A549 (cell line): ENCODE measurements at regions of chr15 and their contacts with region 1.

Region 1: GRCh38 chr15:74382004-74382816 is 14.8 kb upstream of the CYP11A1 start:
- DNase-seq: peak; percentile 62 to 87
- ATAC-seq: peak; percentile 86 to 96
- H3K4me3 ChIP-seq: no peak overlapping the region
- H3K27ac ChIP-seq: no peak overlapping the region
- H3K4me1 ChIP-seq: peaks cover 9% of the 10 kb centered on the region
- CTCF ChIP-seq: peak; percentile 78
- EP300 ChIP-seq: no peak
- POLR2A ChIP-seq: no peak
- RAD21 ChIP-seq: peak; percentile 89 to 91

Region 2: GRCh38 chr15:74172701-74173379 is 209.4 kb before region 1 on chr15:
- CTCF ChIA-PET with region 1: no interaction called
- POLR2A ChIA-PET with region 1: no interaction called
- DNase-seq: no peak
- ATAC-seq: 0 out of 6 replicates have a peak, but pooled peaks of 1 of the 2 experiments have one; percentile 8
- H3K4me3 ChIP-seq: no peak overlapping the region
- H3K27ac ChIP-seq: peak overlapping the region in 1 of 2 experiments; percentile 79; a peak in 4 of 6 replicates
- H3K4me1 ChIP-seq: peaks cover 31% of the 10 kb centered on the region
- CTCF ChIP-seq: no peak
- EP300 ChIP-seq: no peak
- POLR2A ChIP-seq: no peak
- RAD21 ChIP-seq: no peak

Region 3: GRCh38 chr15:74407055-74407691 is 25.0 kb after region 1 on chr15:
- CTCF ChIA-PET with region 1: interaction called, 33 read pairs
- POLR2A ChIA-PET with region 1: no interaction called
- DNase-seq: peak; percentile 21 to 31
- ATAC-seq: peak; percentile 57 to 76
- H3K4me3 ChIP-seq: no peak overlapping the region
- H3K27ac ChIP-seq: peak overlapping the region in 1 of 2 experiments; percentile 55; a peak in 2 of 6 replicates
- H3K4me1 ChIP-seq: peaks cover 8% of the 10 kb centered on the region; the same call in 1 of the 3 replicates
- CTCF ChIP-seq: no peak
- EP300 ChIP-seq: no peak
- POLR2A ChIP-seq: no peak
- RAD21 ChIP-seq: no peak

Region 4: GRCh38 chr15:74460871-74461846 is 78.9 kb after region 1 on chr15 and contains the start of gene UBL7:
- CTCF ChIA-PET with region 1: interaction called, 11 read pairs
- POLR2A ChIA-PET with region 1: interaction called, 7 read pairs
- DNase-seq: peak; percentile 80 to 93
- ATAC-seq: peak; percentile 99
- H3K4me3 ChIP-seq: peak within 1 kb of the TSS; percentile 73
- H3K27ac ChIP-seq: peak within 1 kb of the TSS; percentile 78 to 90
- H3K4me1 ChIP-seq: 0 out of 3 replicates have a peak, but pooled peaks cover 6% of the 10 kb centered on the region
- CTCF ChIP-seq: no peak
- EP300 ChIP-seq: no peak
- POLR2A ChIP-seq: peak; percentile 90
- RAD21 ChIP-seq: no peak
- polyA plus RNA-seq, gene UBL7: 48.5 and 62.4 TPM in 2 replicates

Region 5: DNA sequence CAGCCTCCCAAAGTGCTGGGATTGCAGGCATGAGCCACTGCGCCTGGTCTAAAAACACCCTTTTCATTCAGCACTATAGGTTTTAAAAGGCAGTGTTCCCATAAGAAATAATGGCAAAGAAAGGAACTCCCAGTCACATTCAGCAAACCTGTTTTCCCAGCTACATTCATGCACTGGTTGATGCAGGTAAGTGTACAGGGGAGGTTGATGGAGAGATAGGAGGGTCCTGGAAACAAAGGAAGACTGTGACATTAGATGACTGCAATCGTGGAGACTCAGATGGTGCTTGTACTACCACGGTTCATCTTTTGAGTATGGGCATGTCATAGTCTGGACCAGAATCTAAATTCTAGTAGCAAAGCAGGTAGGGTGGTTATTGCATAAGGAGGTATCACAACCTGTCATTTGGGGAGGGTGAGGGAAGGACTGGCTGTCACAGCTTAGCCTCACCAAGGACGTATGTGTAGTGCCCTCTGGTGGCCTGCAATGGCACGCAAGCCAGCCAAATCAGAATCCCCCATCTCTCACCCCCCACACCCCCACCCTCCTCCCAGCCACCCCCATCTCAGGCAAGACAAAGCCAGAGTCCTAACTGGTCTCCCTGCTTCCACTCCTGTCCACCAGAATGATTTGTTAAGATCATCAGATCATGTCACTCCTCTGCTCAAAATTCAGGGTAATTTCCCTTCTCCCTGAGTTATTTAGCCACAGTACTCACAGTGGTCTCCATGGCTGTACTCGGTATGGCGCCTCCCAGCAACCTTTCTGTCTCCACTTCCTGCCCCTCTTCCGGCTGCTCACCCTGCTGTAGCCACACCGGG is 107.5 kb after region 1 on chr15:
- CTCF ChIA-PET with region 1: interaction called, 10 read pairs
- POLR2A ChIA-PET with region 1: no interaction called
- DNase-seq: peak; percentile 51 to 58
- ATAC-seq: peak; percentile 76 to 92
- H3K4me3 ChIP-seq: no peak overlapping the region
- H3K27ac ChIP-seq: no peak overlapping the region
- H3K4me1 ChIP-seq: 0 out of 3 replicates have a peak, but pooled peaks cover 2% of the 10 kb centered on the region
- CTCF ChIP-seq: peak; percentile 59
- EP300 ChIP-seq: no peak
- POLR2A ChIP-seq: no peak
- RAD21 ChIP-seq: peak; percentile 33 to 42; a peak in 3 of 5 replicates

Region 6: GRCh38 chr15:74808073-74808755 is 426.0 kb after region 1 on chr15:
- CTCF ChIA-PET with region 1: no interaction called
- POLR2A ChIA-PET with region 1: no interaction called
- DNase-seq: no peak
- ATAC-seq: peak in 1 of 2 experiments; percentile 23; a peak in 3 of 6 replicates
- H3K4me3 ChIP-seq: no peak overlapping the region
- H3K27ac ChIP-seq: no peak overlapping the region
- H3K4me1 ChIP-seq: no peaks in the 10 kb centered on the region
- CTCF ChIP-seq: no peak
- EP300 ChIP-seq: no peak
- POLR2A ChIP-seq: no peak
- RAD21 ChIP-seq: no peak